ENCODE measurements at regions of chr17 and their contacts with region 1.

Region 1: GRCh38 chr17:63697341-63698286 is 2.3 kb downstream of the LIMD2 start:
- DNase-seq: peak; percentile 73 to 93 (median 87)
- ATAC-seq: peak; percentile 32
- H3K4me3 ChIP-seq: peak overlapping the region; percentile 81 to 95
- H3K4me3 Mint-ChIP-seq: peak overlapping the region; percentile 98
- H3K27ac ChIP-seq: peak overlapping the region; percentile 65 to 82
- H3K27ac Mint-ChIP-seq: peak overlapping the region; percentile 98
- H3K4me1 ChIP-seq: peaks cover 53% of the 10 kb centered on the region
- H3K4me1 Mint-ChIP-seq: peaks cover 65% of the 10 kb centered on the region
- H3K27me3 ChIP-seq: no peaks in the 10 kb centered on the region
- H3K27me3 Mint-ChIP-seq: no peaks in the 10 kb centered on the region
- CTCF ChIP-seq: peak; percentile 84

Region 2: DNA sequence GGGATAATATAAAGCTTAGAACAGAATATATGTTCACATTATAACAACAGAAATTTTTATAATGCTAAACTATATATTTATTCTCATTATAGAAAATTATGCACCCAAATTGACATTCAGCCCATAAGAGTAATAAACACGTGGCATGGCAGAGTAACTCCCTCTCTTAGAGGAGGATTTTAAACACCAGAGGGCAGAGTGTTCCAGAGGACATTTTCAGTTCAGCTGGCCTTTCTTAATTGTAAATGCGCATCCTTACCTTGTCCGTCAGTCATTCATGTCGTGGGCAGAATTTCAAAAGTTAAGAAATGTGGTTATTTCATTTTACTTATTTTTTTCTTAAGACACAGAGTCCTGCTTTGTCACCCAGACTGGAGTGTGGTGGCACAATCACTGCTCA is 584.4 kb before region 1 on chr17:
- CTCF ChIA-PET with region 1: no interaction called
- POLR2A ChIA-PET with region 1: no interaction called
- intact Hi-C with region 1: no loop called
- DNase-seq: no peak
- ATAC-seq: no peak
- H3K4me3 ChIP-seq: no peak overlapping the region
- H3K4me3 Mint-ChIP-seq: no peak overlapping the region
- H3K27ac ChIP-seq: no peak overlapping the region
- H3K27ac Mint-ChIP-seq: no peak overlapping the region
- H3K4me1 ChIP-seq: no peaks in the 10 kb centered on the region
- H3K4me1 Mint-ChIP-seq: no peaks in the 10 kb centered on the region
- H3K27me3 ChIP-seq: no peaks in the 10 kb centered on the region
- H3K27me3 Mint-ChIP-seq: no peaks in the 10 kb centered on the region
- CTCF ChIP-seq: no peak

Region 3: GRCh38 chr17:63549946-63550807 is 147.4 kb before region 1 on chr17 and contains the start of gene DCAF7:
- CTCF ChIA-PET with region 1: no interaction called
- POLR2A ChIA-PET with region 1: interaction called, 5 read pairs
- intact Hi-C with region 1: loop called (anchors 2 kb)
- DNase-seq: peak; percentile 99 to 100 (median 99)
- ATAC-seq: peak; percentile 94
- H3K4me3 ChIP-seq: peak within 1 kb of the TSS; percentile 99 to 100
- H3K4me3 Mint-ChIP-seq: peak within 1 kb of the TSS; percentile 98
- H3K27ac ChIP-seq: peak within 1 kb of the TSS; percentile 86 to 97
- H3K27ac Mint-ChIP-seq: peak within 1 kb of the TSS; percentile 98
- H3K4me1 ChIP-seq: peaks cover 39% of the 10 kb centered on the region
- H3K4me1 Mint-ChIP-seq: peaks cover 45% of the 10 kb centered on the region
- H3K27me3 ChIP-seq: no peaks in the 10 kb centered on the region
- H3K27me3 Mint-ChIP-seq: no peaks in the 10 kb centered on the region
- CTCF ChIP-seq: no peak
- total RNA-seq, gene DCAF7: 10.7 to 11.7 TPM

Region 4: DNA sequence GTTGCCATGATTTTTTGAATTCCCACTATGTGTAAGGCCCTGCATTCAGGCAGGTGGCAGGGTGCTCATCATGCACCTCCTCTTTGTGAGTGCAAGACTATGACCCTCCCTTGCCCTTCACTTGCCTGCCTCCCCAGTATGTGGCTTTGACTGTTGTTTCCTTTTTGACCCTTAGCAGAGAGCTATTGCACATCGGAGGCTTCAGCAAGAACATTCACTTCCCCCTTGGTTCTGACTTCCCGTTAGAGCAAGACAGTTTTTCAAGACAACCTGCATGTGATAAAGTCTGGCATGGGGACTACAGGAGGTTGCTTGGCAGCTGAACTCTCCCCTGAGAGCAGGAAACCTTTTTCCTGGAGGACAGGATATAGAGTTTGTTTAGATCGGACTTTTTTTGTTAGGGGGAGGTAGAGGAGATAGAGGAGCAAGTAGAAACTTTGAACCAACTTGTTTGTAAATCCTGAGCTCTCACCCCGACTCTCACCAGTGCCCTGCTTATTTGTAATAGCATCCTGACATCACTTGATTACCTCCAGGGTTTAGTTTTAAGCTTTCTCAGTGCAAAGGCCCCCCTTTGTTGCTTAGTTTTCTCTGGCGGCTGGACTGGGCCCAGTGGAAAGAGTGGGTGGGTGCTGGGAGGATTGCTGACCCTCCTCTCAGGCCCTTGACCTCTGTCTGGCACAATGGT is 31.9 kb before region 1 on chr17:
- CTCF ChIA-PET with region 1: no interaction called
- POLR2A ChIA-PET with region 1: interaction called, 17 read pairs
- intact Hi-C with region 1: no loop called
- DNase-seq: no peak
- ATAC-seq: no peak
- H3K4me3 ChIP-seq: no peak overlapping the region
- H3K4me3 Mint-ChIP-seq: no peak overlapping the region
- H3K27ac ChIP-seq: no peak overlapping the region
- H3K27ac Mint-ChIP-seq: no peak overlapping the region
- H3K4me1 ChIP-seq: no peaks in the 10 kb centered on the region
- H3K4me1 Mint-ChIP-seq: peaks cover 13% of the 10 kb centered on the region
- H3K27me3 ChIP-seq: no peaks in the 10 kb centered on the region
- H3K27me3 Mint-ChIP-seq: no peaks in the 10 kb centered on the region
- CTCF ChIP-seq: no peak

Region 5: GRCh38 chr17:63714547-63715277 is 17.1 kb after region 1 on chr17:
- CTCF ChIA-PET with region 1: interaction called, 233 read pairs
- POLR2A ChIA-PET with region 1: interaction called, 649 read pairs
- intact Hi-C with region 1: loop called (anchors 1 kb)
- DNase-seq: no peak
- ATAC-seq: no peak
- H3K4me3 ChIP-seq: no peak overlapping the region
- H3K4me3 Mint-ChIP-seq: no peak overlapping the region
- H3K27ac ChIP-seq: no peak overlapping the region
- H3K27ac Mint-ChIP-seq: no peak overlapping the region
- H3K4me1 ChIP-seq: peaks cover 12% of the 10 kb centered on the region
- H3K4me1 Mint-ChIP-seq: peaks cover 15% of the 10 kb centered on the region
- H3K27me3 ChIP-seq: no peaks in the 10 kb centered on the region
- H3K27me3 Mint-ChIP-seq: no peaks in the 10 kb centered on the region
- CTCF ChIP-seq: no peak

Region 6: GRCh38 chr17:63773381-63774140 is 75.9 kb after region 1 on chr17 and contains the start of gene CCDC47:
- CTCF ChIA-PET with region 1: interaction called, 20 read pairs
- POLR2A ChIA-PET with region 1: interaction called, 149 read pairs
- intact Hi-C with region 1: loop called (anchors 1 kb)
- DNase-seq: peak; percentile 95 to 100 (median 97)
- ATAC-seq: peak; percentile 79
- H3K4me3 ChIP-seq: peak within 1 kb of the TSS; percentile 84 to 95
- H3K4me3 Mint-ChIP-seq: peak within 1 kb of the TSS; percentile 97
- H3K27ac ChIP-seq: peak within 1 kb of the TSS; percentile 86 to 97
- H3K27ac Mint-ChIP-seq: peak within 1 kb of the TSS; percentile 98
- H3K4me1 ChIP-seq: peaks cover 41% of the 10 kb centered on the region
- H3K4me1 Mint-ChIP-seq: peaks cover 60% of the 10 kb centered on the region
- H3K27me3 ChIP-seq: no peaks in the 10 kb centered on the region
- H3K27me3 Mint-ChIP-seq: no peaks in the 10 kb centered on the region
- CTCF ChIP-seq: no peak
- total RNA-seq, gene CCDC47: 33.1 to 34.6 TPM

Region 7: DNA sequence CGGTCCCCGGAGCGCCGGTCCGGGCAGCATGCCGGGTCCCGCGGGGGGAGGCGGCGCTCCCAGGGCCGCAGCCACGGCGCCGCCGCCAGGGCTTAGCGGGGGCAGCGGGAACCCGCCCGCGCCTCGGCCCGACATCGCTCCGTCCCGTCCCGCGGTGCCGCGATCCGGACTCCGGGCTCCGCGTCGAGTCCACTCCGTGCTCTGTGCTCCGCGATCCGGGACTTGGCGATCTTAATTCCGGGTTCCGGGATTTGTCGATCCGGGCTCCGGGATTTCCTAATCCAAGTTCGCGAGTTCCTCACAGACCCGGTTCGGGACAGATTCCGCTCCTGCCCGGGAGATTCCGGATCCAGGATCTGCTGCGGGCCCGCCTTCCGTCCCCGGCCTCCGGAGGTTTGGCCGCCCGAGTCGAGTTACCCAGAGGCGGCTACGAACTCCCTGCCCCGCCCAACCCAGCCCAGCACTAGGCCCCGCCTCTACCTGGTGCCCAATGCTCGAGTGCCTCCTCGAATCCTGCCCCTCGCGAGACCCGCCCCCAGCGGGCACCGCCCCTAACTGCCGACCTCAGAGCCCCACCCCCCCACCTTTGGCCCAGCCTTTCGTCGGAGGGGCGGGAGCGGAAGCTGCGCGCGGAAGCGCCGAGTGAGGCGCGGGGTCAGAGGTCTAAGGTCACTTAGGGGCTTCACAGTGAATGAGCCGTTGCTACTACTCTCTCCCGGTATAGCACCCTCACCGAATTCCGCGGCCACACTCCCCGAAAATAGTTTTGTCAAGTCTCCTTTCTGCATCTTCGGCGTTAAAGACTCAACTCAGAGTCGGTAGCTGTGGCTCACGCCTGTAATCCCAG is 145.1 kb after region 1 on chr17 and contains the start of gene SMARCD2:
- CTCF ChIA-PET with region 1: no interaction called
- POLR2A ChIA-PET with region 1: interaction called, 10 read pairs
- intact Hi-C with region 1: loop called (anchors 1 to 2 kb)
- DNase-seq: peak; percentile 99
- ATAC-seq: peak; percentile 91
- H3K4me3 ChIP-seq: peak within 1 kb of the TSS; percentile 86 to 95
- H3K4me3 Mint-ChIP-seq: peak within 1 kb of the TSS; percentile 92
- H3K27ac ChIP-seq: peak within 1 kb of the TSS; percentile 88 to 95
- H3K27ac Mint-ChIP-seq: peak within 1 kb of the TSS; percentile 92
- H3K4me1 ChIP-seq: peaks cover 43% of the 10 kb centered on the region
- H3K4me1 Mint-ChIP-seq: peaks cover 30% of the 10 kb centered on the region
- H3K27me3 ChIP-seq: no peaks in the 10 kb centered on the region
- H3K27me3 Mint-ChIP-seq: no peaks in the 10 kb centered on the region
- CTCF ChIP-seq: no peak
- total RNA-seq, gene SMARCD2: 121 TPM

Region 8: DNA sequence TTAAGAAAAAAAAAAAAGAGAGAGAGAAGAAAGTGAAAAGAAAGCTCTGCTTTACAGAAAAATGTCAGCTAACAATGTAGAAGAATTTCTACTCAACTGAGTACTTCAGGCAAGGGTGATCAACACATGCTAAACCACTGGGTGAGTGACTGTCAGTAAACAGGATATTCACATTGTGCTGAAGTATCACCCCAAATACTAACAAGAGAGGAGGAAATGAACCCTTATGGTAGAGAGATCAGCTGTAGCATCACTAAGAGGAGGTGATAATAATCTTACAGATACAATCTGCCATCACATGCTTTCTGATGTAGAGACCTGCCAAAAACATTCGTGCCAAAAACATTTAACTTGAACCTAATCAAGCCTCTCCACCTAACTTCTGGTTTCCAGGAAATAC is 353.5 kb after region 1 on chr17:
- CTCF ChIA-PET with region 1: no interaction called
- POLR2A ChIA-PET with region 1: no interaction called
- intact Hi-C with region 1: no loop called
- DNase-seq: peak in 3 of 9 experiments; percentile 10 to 78 (median 67)
- ATAC-seq: peak; percentile 99
- H3K4me3 ChIP-seq: no peak overlapping the region
- H3K4me3 Mint-ChIP-seq: no peak overlapping the region
- H3K27ac ChIP-seq: peak overlapping the region; percentile 6 to 70
- H3K27ac Mint-ChIP-seq: peak overlapping the region; percentile 88
- H3K4me1 ChIP-seq: peaks cover 26% of the 10 kb centered on the region
- H3K4me1 Mint-ChIP-seq: peaks cover 35% of the 10 kb centered on the region
- H3K27me3 ChIP-seq: no peaks in the 10 kb centered on the region
- H3K27me3 Mint-ChIP-seq: no peaks in the 10 kb centered on the region
- CTCF ChIP-seq: no peak

Region 9: GRCh38 chr17:64506576-64507477 is 809.2 kb after region 1 on chr17 and contains the start of gene CEP95:
- CTCF ChIA-PET with region 1: no interaction called
- POLR2A ChIA-PET with region 1: interaction called, 20 read pairs
- intact Hi-C with region 1: loop called in 1 of 2 experiments (anchors 2 kb)
- DNase-seq: peak; percentile 90 to 99 (median 96)
- ATAC-seq: peak; percentile 64
- H3K4me3 ChIP-seq: peak within 1 kb of the TSS; percentile 99 to 100
- H3K4me3 Mint-ChIP-seq: peak within 1 kb of the TSS; percentile 100
- H3K27ac ChIP-seq: peak within 1 kb of the TSS; percentile 100
- H3K27ac Mint-ChIP-seq: peak within 1 kb of the TSS; percentile 100
- H3K4me1 ChIP-seq: peaks cover 44% of the 10 kb centered on the region
- H3K4me1 Mint-ChIP-seq: peaks cover 62% of the 10 kb centered on the region
- H3K27me3 ChIP-seq: no peaks in the 10 kb centered on the region
- H3K27me3 Mint-ChIP-seq: no peaks in the 10 kb centered on the region
- CTCF ChIP-seq: no peak
- total RNA-seq, gene CEP95: 248 to 282 TPM

Measured in CD8-positive, alpha-beta T cell (primary cell).